Right ventricle myocardium superior (tissue), 1 donor: ENCODE measurements at regions of chr13 and their contacts with region 1.

Region 1: DNA sequence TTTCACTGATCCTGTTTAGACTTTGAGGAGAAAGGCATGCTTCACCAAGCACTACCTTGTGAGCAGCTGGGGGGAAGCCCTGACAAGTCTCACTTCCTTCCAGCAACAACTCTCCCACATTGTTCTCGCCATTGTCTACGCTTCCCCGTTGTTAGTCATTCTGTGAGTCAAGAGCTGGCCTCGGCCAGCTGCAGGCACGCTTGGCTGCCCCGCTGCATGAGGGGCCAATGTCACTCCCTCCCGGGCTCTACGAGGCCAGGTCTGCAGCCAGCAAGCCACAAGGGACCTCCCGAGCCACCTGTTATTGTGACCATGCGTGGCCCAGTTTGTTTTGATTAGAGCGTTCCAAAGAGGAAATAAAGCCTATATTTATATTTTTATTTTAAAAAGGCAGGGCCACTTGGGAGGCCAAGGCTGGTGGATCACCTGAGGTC is 220.9 kb downstream of the FOXO1 start:
- DNase-seq: peak; percentile 64
- ATAC-seq: peak; percentile 21

Region 2: GRCh38 chr13:40549500-40550094 is 104.0 kb after region 1 on chr13:
- intact Hi-C with region 1: no loop called
- DNase-seq: no peak
- ATAC-seq: no peak

Region 3: GRCh38 chr13:40666045-40666904 is 220.7 kb after region 1 on chr13 and contains the start of gene FOXO1:
- intact Hi-C with region 1: loop called (anchors 5 kb)
- DNase-seq: peak; percentile 94
- ATAC-seq: peak; percentile 87
- total RNA-seq, gene FOXO1: 14.4 TPM